ENCODE measurements at regions of chr12 and their contacts with region 1.

Region 1: GRCh38 chr12:60106214-60106613 is 510.4 kb downstream of the SLC16A7 start:
- DNase-seq: peak; percentile 45
- H3K4me3 ChIP-seq: no peak overlapping the region
- H3K27ac ChIP-seq: no peak overlapping the region
- H3K4me1 ChIP-seq: peaks cover 14% of the 10 kb centered on the region
- H3K27me3 ChIP-seq: no peaks in the 10 kb centered on the region

Region 2: GRCh38 chr12:60014436-60014835 is 91.8 kb before region 1 on chr12:
- in situ Hi-C with region 1: loop called (anchors 25 kb)
- DNase-seq: no peak
- H3K4me3 ChIP-seq: no peak overlapping the region
- H3K27ac ChIP-seq: no peak overlapping the region
- H3K4me1 ChIP-seq: no peaks in the 10 kb centered on the region
- H3K27me3 ChIP-seq: no peaks in the 10 kb centered on the region